ENCODE measurements at regions of chr7 and their contacts with region 1.

Region 1: DNA sequence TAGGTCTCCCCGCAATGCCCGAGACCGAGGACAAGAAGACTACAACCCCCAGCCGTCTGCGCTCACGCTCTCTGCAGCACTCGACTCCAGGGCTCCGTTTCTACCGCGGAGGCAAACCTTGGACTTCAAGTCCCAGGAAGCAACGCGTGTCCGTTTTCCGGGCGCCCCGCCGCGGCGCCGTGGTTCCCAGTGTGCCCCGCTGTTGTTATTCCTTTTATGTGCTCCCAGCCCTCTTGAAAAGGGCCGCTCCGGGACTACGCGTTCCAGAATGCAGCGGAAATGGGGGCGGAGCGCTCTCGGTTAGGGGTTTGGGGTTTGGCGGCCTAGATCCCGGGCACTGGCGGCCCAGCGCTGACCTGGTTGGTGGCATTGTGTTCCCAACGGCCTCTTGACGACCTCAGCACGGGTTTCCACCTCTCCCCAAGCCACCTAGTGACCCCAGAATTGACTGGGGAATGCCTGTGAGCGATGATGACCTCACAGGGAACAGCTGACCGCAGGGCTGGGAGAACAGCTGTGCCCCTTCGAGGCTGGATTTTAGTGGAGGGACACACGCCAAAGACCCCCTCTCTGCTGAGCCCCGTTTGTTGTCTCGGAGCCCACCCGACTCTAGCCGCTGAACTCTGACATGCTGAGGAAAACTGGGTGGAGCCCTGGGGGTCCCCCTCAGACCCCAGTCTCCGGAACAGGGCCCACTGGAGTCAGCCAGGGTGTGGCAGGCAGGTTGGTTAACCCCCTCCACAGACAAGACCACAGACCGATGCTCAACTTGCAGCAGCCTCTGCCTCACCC is 488 bp upstream of the CDK5 start:
- DNase-seq: peak; percentile 99 to 100
- H3K4me3 ChIP-seq: peak overlapping the region; percentile 82
- H3K27ac ChIP-seq: peak overlapping the region; percentile 41
- H3K4me1 ChIP-seq: peaks cover 43% of the 10 kb centered on the region
- H3K27me3 ChIP-seq: no peaks in the 10 kb centered on the region
- CTCF ChIP-seq: no peak

Region 2: GRCh38 chr7:150806863-150807262 is 251.3 kb before region 1 on chr7:
- CTCF ChIA-PET with region 1: no interaction called
- POLR2A ChIA-PET with region 1: interaction called, 25 read pairs
- intact Hi-C with region 1: no loop called
- DNase-seq: no peak
- H3K4me3 ChIP-seq: no peak overlapping the region
- H3K27ac ChIP-seq: no peak overlapping the region
- H3K4me1 ChIP-seq: no peaks in the 10 kb centered on the region
- H3K27me3 ChIP-seq: peaks cover 81% of the 10 kb centered on the region
- CTCF ChIP-seq: no peak

Region 3: DNA sequence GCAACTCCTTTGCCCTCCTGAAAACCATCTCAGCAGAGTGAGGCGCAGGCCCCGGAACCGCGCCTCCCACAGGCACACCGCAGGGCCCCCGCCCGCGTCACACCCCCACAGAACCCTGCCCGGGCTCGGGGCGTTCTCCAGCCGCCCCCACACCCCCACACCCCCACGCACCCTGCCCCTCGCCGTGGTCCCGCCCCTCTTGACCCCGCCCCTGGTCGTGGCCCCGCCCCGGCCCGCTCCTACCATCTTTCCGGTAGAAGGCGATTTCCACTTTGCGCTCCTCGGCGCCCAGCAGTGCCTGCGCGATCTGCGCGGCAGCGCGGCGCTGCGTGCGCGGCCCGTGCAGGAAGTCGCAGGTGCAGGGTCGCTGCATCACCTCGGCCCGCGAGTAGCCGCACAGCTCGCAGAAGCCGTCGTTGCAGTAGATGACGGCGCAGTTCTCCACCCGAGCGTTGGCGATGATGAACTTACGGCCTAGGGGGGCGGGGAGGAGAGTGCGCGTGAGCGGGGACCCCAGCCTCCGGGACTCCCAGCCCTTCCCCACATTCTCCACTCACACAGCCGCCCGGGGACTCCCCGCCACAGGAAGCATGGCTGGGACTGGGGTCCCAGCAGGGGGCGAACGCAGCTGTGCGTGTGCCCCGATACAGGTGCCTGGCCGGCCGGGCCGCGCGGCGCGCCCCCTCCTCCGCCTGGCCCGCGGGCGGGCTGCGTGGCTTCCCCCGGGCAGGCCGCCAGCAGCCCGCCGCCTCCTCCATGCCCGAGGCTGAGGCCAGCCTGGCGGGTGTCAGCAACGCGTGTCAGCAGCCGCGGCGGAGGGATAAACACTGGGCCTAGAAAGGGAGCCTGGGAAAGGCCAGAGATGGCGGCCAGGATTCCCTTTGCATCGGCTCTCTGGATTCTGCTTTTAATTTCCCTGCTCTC is 83.5 kb before region 1 on chr7:
- CTCF ChIA-PET with region 1: interaction called, 12 read pairs
- POLR2A ChIA-PET with region 1: no interaction called
- intact Hi-C with region 1: no loop called
- DNase-seq: peak in 1 of 2 experiments; percentile 67
- H3K4me3 ChIP-seq: peak overlapping the region; percentile 65
- H3K27ac ChIP-seq: no peak overlapping the region
- H3K4me1 ChIP-seq: 0 out of 2 replicates have a peak, but pooled peaks cover 4% of the 10 kb centered on the region
- H3K27me3 ChIP-seq: peaks cover 52% of the 10 kb centered on the region
- CTCF ChIP-seq: peak; percentile 42; the same call in 1 of the 2 replicates

Region 4: GRCh38 chr7:151017953-151018420 is 40.2 kb before region 1 on chr7:
- CTCF ChIA-PET with region 1: no interaction called
- POLR2A ChIA-PET with region 1: no interaction called
- intact Hi-C with region 1: no loop called
- DNase-seq: peak in 1 of 2 experiments; percentile 58
- H3K4me3 ChIP-seq: no peak overlapping the region
- H3K27ac ChIP-seq: no peak overlapping the region
- H3K4me1 ChIP-seq: no peaks in the 10 kb centered on the region; the same call in 1 of the 2 replicates
- H3K27me3 ChIP-seq: no peaks in the 10 kb centered on the region
- CTCF ChIP-seq: peak; percentile 97

Region 5: DNA sequence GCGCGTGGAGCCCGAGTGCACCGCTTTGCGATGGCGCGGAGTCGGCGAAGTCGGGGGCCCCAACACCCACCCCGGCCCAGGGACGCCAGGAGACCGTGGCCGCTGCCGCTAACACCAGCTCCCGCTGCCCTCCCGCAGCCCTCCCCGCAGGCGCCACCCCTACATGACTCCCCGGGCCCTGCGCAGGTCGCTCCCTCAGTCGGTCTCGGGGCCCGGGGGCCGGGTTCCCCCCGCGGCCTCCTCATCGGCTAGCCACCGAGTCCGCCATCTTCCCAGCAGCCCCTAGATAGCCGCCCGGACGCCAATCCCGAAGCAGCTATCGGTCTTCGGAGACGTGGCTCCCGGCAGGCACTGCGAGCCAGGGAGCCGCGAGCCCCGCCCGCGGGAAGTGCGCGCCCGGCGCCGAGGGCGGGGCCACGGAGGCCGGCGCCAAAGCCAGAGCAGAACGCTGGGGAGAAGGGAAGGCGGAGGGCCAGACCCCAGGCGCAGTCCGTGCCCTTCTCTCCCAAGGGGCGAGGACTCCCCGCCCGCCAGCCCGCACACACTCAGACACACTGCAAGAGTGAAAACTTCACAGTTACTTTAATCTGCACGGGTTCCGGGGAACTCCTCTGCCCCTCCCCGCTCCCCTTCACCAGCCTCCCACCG is 22.5 kb after region 1 on chr7 and contains the start of gene FASTK:
- CTCF ChIA-PET with region 1: interaction called, 4 read pairs
- POLR2A ChIA-PET with region 1: interaction called, 8 read pairs
- intact Hi-C with region 1: loop called (anchors 1 kb)
- DNase-seq: peak; percentile 82 to 93
- H3K4me3 ChIP-seq: peak within 1 kb of the TSS; percentile 89
- H3K27ac ChIP-seq: peak within 1 kb of the TSS; percentile 70
- H3K4me1 ChIP-seq: peaks cover 35% of the 10 kb centered on the region
- H3K27me3 ChIP-seq: no peaks in the 10 kb centered on the region
- CTCF ChIP-seq: no peak
- total RNA-seq, gene FASTK: 104 and 126 TPM in 2 replicates

Region 6: GRCh38 chr7:151099486-151100211 is 41.5 kb after region 1 on chr7:
- CTCF ChIA-PET with region 1: no interaction called
- POLR2A ChIA-PET with region 1: no interaction called
- intact Hi-C with region 1: no loop called
- DNase-seq: no peak
- H3K4me3 ChIP-seq: no peak overlapping the region
- H3K27ac ChIP-seq: no peak overlapping the region
- H3K4me1 ChIP-seq: no peaks in the 10 kb centered on the region
- H3K27me3 ChIP-seq: no peaks in the 10 kb centered on the region
- CTCF ChIP-seq: no peak

Region 7: DNA sequence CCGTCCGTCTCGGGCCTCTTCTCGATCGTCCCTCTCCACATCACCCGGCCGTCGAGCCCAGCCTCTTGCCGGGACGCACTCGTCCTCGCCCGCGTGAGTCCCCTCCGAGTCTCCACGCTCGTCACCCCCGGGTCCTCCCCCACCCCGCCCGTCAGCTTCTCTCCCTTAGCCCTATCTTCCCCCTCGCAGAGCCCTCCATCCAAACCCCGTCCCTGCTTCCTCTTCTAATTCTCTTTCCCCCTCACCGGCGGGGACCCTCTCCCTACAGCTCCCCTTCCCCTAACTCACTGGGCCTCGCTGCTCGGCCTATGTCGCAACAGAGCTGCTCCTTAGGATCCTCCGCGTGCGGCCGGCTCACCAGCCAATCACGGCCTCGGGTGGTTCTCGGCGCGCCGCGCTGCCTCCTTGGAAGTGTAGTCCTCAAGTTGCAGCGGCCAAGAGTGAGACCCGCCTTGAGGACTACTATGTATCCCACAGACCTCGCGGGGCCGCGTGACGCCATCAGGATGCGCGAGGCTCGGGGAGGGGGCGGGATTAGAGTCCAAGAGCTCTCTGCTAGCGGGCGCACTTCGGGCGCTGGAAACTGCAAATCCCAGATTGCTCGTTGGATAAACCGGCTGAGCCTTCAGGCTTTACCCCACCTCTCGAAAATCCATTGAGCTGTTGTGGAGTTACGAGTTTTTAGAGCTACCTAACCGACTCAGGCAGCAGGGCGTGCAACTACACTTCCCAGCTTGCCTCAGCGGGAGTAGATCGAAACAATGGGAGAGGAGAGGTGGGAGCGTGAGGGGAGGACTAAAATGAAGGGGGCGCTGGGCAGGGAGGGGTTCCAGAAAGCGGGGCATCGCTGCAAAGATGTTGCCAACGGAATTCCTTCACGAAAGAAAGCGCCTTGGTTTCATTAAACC is 168.9 kb after region 1 on chr7 and contains the start of gene ABCF2:
- CTCF ChIA-PET with region 1: no interaction called
- POLR2A ChIA-PET with region 1: no interaction called
- intact Hi-C with region 1: loop called (anchors 1 kb)
- DNase-seq: peak; percentile 98 to 99
- H3K4me3 ChIP-seq: peak within 1 kb of the TSS; percentile 70
- H3K27ac ChIP-seq: peak within 1 kb of the TSS; percentile 66
- H3K4me1 ChIP-seq: peaks cover 30% of the 10 kb centered on the region
- H3K27me3 ChIP-seq: no peaks in the 10 kb centered on the region
- CTCF ChIP-seq: no peak
- total RNA-seq, gene ABCF2: 45.8 and 49.4 TPM in 2 replicates

Region 8: GRCh38 chr7:151696721-151697514 is 638.7 kb after region 1 on chr7:
- CTCF ChIA-PET with region 1: no interaction called
- POLR2A ChIA-PET with region 1: no interaction called
- intact Hi-C with region 1: no loop called
- DNase-seq: peak; percentile 88 to 93
- H3K4me3 ChIP-seq: no peak overlapping the region
- H3K27ac ChIP-seq: peak overlapping the region; percentile 16; the same call in 1 of the 2 replicates
- H3K4me1 ChIP-seq: peaks cover 72% of the 10 kb centered on the region
- H3K27me3 ChIP-seq: no peaks in the 10 kb centered on the region
- CTCF ChIP-seq: no peak